T-cell (primary cell): ENCODE measurements at regions of chr3 and their contacts with region 1.

Region 1: GRCh38 chr3:195271116-195271858 is at the start of gene XXYLT1:
- DNase-seq: peak; percentile 72 to 92 (median 84)
- ATAC-seq: peak; percentile 87 to 91 (median 88)
- H3K4me3 ChIP-seq: peak within 1 kb of the TSS; percentile 58 to 89
- H3K4me3 Mint-ChIP-seq: peak within 1 kb of the TSS; percentile 80 to 87 (median 81)
- H3K27ac ChIP-seq: peak within 1 kb of the TSS; percentile 61
- H3K27ac Mint-ChIP-seq: peak within 1 kb of the TSS; percentile 81 to 85
- H3K4me1 ChIP-seq: peaks cover 13 to 20% of the 10 kb centered on the region in 2 experiments
- H3K4me1 Mint-ChIP-seq: peaks cover 23 to 30% (median 25%) of the 10 kb centered on the region in 3 donors
- H3K27me3 ChIP-seq: no peaks in the 10 kb centered on the region
- H3K27me3 Mint-ChIP-seq: no peaks in the 10 kb centered on the region
- total RNA-seq, gene XXYLT1: 4.6 to 9.1 (median 5.7) TPM

Region 2: DNA sequence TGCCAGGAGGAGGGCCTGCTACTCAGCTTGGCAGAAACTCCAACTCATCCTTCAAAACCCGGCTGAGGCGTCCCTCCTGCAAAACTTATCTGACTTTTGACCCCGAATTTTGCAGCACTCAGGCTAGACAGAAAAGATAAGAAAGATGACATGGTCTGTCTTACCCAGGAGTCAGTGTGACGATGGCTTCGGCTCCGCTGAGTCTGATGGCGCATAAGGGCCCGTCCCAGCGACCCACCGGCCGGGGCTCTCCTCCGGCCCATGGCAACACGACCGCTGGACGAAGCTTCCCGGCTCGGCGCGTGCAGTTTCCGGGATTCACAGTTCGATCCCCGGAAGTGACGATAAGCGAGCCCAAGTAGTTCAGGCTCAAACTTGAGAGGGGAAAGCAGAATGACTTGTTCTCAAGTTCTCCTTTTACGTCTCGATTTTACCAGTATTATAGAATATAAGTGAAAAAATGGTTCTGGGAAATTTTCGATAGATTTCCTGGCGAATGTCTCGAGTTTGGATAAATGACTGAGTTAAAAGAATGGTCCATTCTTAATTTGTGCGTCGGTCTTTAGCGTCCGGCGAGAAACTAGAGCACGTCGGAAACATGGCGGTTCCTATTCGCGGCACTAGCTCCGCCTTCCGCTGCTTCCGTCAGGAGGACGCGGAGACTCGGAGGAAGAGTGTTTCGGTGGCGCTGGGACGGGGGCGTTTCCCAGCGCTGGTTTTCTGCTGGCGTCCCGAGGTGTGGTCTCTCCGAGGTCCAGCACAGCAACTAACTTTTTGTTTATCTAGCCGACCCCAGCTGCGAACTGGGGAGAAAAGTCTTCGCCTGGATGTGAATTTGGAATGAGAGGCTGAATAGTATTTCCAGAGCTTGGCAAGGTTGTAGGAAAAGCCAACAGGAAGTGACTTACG is 599.1 kb before region 1 on chr3 and contains the start of gene LSG1:
- CTCF ChIA-PET with region 1: interaction called in 1 of 2 experiments, 15 read pairs
- POLR2A ChIA-PET with region 1: interaction called in 1 of 2 experiments, 3 read pairs
- DNase-seq: peak; percentile 77 to 97 (median 87)
- ATAC-seq: peak; percentile 95 to 96 (median 96)
- H3K4me3 ChIP-seq: peak within 1 kb of the TSS; percentile 68 to 95
- H3K4me3 Mint-ChIP-seq: peak within 1 kb of the TSS; percentile 98 to 99 (median 99)
- H3K27ac ChIP-seq: peak within 1 kb of the TSS; percentile 90
- H3K27ac Mint-ChIP-seq: peak within 1 kb of the TSS; percentile 98 to 99
- H3K4me1 ChIP-seq: peaks cover 10 to 14% of the 10 kb centered on the region in 2 experiments
- H3K4me1 Mint-ChIP-seq: peaks cover 39 to 45% (median 42%) of the 10 kb centered on the region in 3 donors
- H3K27me3 ChIP-seq: no peaks in the 10 kb centered on the region
- H3K27me3 Mint-ChIP-seq: peaks cover 0 to 5% of the 10 kb centered on the region in 2 donors
- total RNA-seq, gene LSG1: 40.0 to 83.5 (median 49.5) TPM

Region 3: DNA sequence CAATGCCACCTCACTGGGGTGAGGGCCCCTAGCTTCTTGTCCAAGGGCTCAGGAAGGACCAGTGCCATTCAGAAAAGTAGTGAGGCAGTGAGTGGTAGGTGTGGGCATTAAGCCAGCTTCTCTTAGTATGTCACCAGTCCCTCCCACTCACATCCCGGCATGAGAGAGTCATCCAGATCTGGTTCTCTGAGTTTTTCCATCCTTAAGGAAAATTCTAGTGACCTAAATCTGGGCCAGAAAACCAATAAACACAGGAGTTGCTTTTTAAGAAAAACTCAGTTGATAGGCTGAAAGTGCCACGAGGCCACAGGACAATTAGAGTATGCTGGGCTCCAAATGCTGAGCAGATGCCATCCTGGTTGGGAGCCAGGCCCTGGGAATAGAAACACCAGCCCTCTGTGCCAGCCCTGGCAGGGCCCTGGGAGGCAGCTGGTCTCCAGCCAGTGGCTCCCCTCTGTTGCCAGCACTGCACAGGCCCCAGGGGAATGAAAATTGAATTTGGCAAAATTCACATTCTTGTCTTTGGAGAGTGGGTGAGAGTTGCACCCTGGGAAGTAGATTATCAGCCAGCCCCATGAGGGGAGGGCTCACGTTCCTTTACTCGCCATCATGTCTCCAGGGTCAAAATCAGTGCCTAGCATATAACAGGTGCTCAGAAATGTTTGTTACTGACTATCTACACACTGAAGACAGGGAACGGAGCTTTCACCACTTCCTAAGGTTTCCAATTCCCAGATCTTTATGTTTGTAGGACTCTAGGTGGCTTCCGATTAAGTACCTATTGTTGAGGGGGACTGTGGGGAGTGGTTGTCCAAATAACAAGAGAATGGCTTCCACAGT is 532.8 kb before region 1 on chr3:
- CTCF ChIA-PET with region 1: no interaction called
- POLR2A ChIA-PET with region 1: no interaction called
- DNase-seq: no peak
- ATAC-seq: no peak
- H3K4me3 ChIP-seq: no peak overlapping the region
- H3K4me3 Mint-ChIP-seq: no peak overlapping the region
- H3K27ac ChIP-seq: no peak overlapping the region
- H3K27ac Mint-ChIP-seq: no peak overlapping the region
- H3K4me1 ChIP-seq: peaks cover 0 to 12% of the 10 kb centered on the region in 2 experiments
- H3K4me1 Mint-ChIP-seq: no peaks in the 10 kb centered on the region
- H3K27me3 ChIP-seq: peaks cover 0 to 41% of the 10 kb centered on the region in 2 experiments
- H3K27me3 Mint-ChIP-seq: peaks cover 16 to 29% of the 10 kb centered on the region in 2 donors

Region 4: DNA sequence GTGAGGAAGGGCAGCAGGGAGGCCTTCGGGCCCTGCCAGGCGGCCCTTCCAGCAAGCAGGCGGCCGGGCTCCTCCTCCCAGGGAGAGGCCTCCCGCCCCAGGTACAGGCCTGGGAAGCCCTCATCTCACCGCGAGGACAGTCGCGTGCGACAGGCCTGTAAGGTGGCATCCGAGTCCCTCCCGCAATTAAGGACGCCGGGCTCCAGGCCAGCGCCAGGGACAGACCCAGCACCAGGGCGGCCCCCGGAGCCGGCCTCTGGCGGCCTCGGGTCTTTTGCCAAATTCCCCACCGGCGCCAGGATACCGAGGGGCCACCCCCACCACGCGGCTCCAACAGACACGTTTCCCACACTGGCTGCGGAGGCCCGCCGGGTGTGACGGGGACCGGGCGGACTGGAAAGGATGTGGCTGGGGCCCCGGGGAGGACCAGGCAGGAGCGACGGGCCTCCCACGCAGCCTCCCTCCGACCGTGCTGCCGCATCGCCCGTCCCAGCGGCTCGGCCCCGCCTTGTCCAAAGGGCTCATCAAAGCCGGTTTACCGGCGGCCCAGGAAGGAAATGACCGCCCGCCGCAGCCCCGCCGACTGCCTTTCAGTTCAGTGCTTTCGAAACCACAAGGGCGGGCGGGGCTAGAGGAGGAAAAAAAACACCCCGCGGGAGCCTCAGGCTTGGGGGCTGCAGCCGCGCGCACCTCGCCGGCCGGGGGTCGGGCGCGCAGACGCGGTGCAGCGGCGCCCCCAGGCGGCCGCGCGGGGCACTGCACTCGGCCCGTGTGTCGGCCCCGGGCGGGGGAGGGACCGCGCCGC is 11.6 kb before region 1 on chr3:
- CTCF ChIA-PET with region 1: interaction called, 4 to 14 read pairs
- POLR2A ChIA-PET with region 1: interaction called, 3 to 4 read pairs
- DNase-seq: peak; percentile 75 to 93 (median 84)
- ATAC-seq: peak; percentile 77 to 91 (median 79)
- H3K4me3 ChIP-seq: peak overlapping the region; percentile 52 to 73
- H3K4me3 Mint-ChIP-seq: peak overlapping the region; percentile 56 to 81 (median 63)
- H3K27ac ChIP-seq: peak overlapping the region; percentile 91
- H3K27ac Mint-ChIP-seq: peak overlapping the region; percentile 90 to 91
- H3K4me1 ChIP-seq: peaks cover 8 to 28% of the 10 kb centered on the region in 2 experiments
- H3K4me1 Mint-ChIP-seq: peaks cover 21 to 24% (median 22%) of the 10 kb centered on the region in 3 donors
- H3K27me3 ChIP-seq: no peaks in the 10 kb centered on the region
- H3K27me3 Mint-ChIP-seq: no peaks in the 10 kb centered on the region

Region 5: GRCh38 chr3:195522254-195523023 is 251.2 kb after region 1 on chr3:
- CTCF ChIA-PET with region 1: interaction called, 9 to 27 read pairs
- POLR2A ChIA-PET with region 1: interaction called in 1 of 2 experiments, 4 read pairs
- DNase-seq: peak in 6 of 35 experiments; percentile 19 to 68 (median 28)
- ATAC-seq: no peak
- H3K4me3 ChIP-seq: no peak overlapping the region
- H3K4me3 Mint-ChIP-seq: no peak overlapping the region
- H3K27ac ChIP-seq: peak overlapping the region; percentile 2
- H3K27ac Mint-ChIP-seq: peak overlapping the region; percentile 50 to 83
- H3K4me1 ChIP-seq: peaks cover 18 to 30% of the 10 kb centered on the region in 2 experiments
- H3K4me1 Mint-ChIP-seq: peaks cover 46 to 55% (median 54%) of the 10 kb centered on the region in 3 donors
- H3K27me3 ChIP-seq: no peaks in the 10 kb centered on the region
- H3K27me3 Mint-ChIP-seq: no peaks in the 10 kb centered on the region

Region 6: DNA sequence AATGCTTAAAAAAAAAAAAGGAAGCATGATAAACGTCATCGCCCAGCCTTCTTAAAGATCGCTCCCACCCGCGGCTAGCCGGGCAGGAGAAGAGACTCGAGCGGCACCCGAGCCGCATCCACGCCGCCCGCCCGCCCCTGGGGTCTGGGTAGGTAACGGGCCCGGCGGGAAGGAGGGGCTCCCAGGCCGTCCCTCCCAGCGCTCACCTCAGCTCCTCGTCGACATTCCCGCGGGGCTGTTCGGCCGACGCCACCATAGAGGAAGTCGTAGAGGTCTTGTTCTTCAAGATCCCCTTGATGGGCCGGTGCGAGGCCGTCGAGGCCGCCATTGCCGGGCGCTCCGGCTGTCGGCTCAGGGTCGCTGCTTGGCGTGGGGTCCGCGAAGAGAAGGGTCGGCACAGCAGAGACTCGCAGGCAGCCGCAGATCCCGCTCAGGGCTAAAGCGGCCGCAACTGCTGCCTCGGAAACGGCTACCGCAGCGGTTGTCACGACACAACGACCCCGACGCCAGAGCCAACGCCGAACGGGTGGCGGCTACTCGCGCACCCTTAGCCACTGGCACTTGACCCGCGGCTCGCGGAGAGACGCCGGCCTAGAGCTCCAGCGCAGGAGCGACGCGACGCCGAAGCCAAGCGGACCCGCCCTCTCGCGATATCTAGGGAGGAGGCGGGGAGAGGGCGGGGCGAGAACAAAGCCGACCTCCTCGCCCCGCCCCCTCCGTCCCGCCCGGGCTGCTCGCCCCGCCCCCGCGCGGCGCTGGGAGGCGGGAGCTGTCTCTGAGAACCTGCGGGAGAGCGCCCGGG is 271.6 kb after region 1 on chr3 and contains the start of gene PPP1R2:
- CTCF ChIA-PET with region 1: interaction called, 3 to 16 read pairs
- POLR2A ChIA-PET with region 1: interaction called, 4 to 7 read pairs
- DNase-seq: peak; percentile 74 to 96 (median 86)
- ATAC-seq: peak; percentile 80 to 91 (median 84)
- H3K4me3 ChIP-seq: peak within 1 kb of the TSS; percentile 85 to 93
- H3K4me3 Mint-ChIP-seq: peak within 1 kb of the TSS; percentile 89 to 93 (median 93)
- H3K27ac ChIP-seq: peak within 1 kb of the TSS; percentile 94
- H3K27ac Mint-ChIP-seq: peak within 1 kb of the TSS; percentile 98
- H3K4me1 ChIP-seq: peaks cover 48 to 72% of the 10 kb centered on the region in 2 experiments
- H3K4me1 Mint-ChIP-seq: peaks cover 68 to 87% (median 76%) of the 10 kb centered on the region in 3 donors
- H3K27me3 ChIP-seq: no peaks in the 10 kb centered on the region
- H3K27me3 Mint-ChIP-seq: no peaks in the 10 kb centered on the region
- total RNA-seq, gene PPP1R2: 113 to 154 (median 123) TPM